Vagina (tissue), 2 donors: ENCODE measurements at regions of chr7 and their contacts with region 1.

Region 1: GRCh38 chr7:90455163-90456030 is 14.0 kb upstream of the PTTG1IP2 start:
- DNase-seq: no peak
- H3K4me3 ChIP-seq: no peak overlapping the region
- H3K27ac ChIP-seq: no peak overlapping the region
- H3K4me1 ChIP-seq: peaks cover 8% of the 10 kb centered on the region
- H3K27me3 ChIP-seq: no peaks in the 10 kb centered on the region
- CTCF ChIP-seq: peak; percentile 4 to 45 (median 35)
- POLR2A ChIP-seq: no peak

Region 2: GRCh38 chr7:90346336-90347125 is 108.9 kb before region 1 on chr7 and contains the start of gene GTPBP10:
- intact Hi-C with region 1: no loop called
- DNase-seq: peak in 1 of 2 donors; percentile 93
- H3K4me3 ChIP-seq: peak within 1 kb of the TSS; percentile 55 to 73
- H3K27ac ChIP-seq: peak within 1 kb of the TSS; percentile 83
- H3K4me1 ChIP-seq: peaks cover 15% of the 10 kb centered on the region
- H3K27me3 ChIP-seq: no peaks in the 10 kb centered on the region
- CTCF ChIP-seq: peak; percentile 60 to 82 (median 70)
- POLR2A ChIP-seq: peak in 1 of 2 donors; percentile 15
- total RNA-seq, gene GTPBP10: 11.0 TPM

Region 3: GRCh38 chr7:90629297-90629918 is 174.0 kb after region 1 on chr7:
- intact Hi-C with region 1: loop called (anchors 10 kb)
- DNase-seq: no peak
- H3K4me3 ChIP-seq: no peak overlapping the region
- H3K27ac ChIP-seq: no peak overlapping the region
- H3K4me1 ChIP-seq: peaks cover 10% of the 10 kb centered on the region
- H3K27me3 ChIP-seq: no peaks in the 10 kb centered on the region
- CTCF ChIP-seq: peak in 2 of 3 experiments; percentile 9 to 17
- POLR2A ChIP-seq: no peak